Natural killer cell (primary cell): ENCODE measurements at regions of chr10 and their contacts with region 1.

Region 1: GRCh38 chr10:95363303-95363912 is 72.6 kb upstream of the PDLIM1 start:
- DNase-seq: peak in 1 of 2 donors; percentile 80
- ATAC-seq: peak; percentile 65 to 83 (median 75)
- H3K4me3 ChIP-seq: no peak overlapping the region
- H3K4me3 Mint-ChIP-seq: no peak overlapping the region
- H3K27ac ChIP-seq: no peak overlapping the region
- H3K27ac Mint-ChIP-seq: no peak overlapping the region
- H3K4me1 ChIP-seq: no peaks in the 10 kb centered on the region
- H3K4me1 Mint-ChIP-seq: no peaks in the 10 kb centered on the region
- H3K27me3 ChIP-seq: no peaks in the 10 kb centered on the region
- H3K27me3 Mint-ChIP-seq: peaks cover 7 to 13% of the 10 kb centered on the region in 2 donors
- CTCF ChIP-seq: peak; percentile 93

Region 2: GRCh38 chr10:95133016-95133752 is 230.2 kb before region 1 on chr10:
- intact Hi-C with region 1: loop called (anchors 1 kb)
- DNase-seq: peak; percentile 40 to 80
- ATAC-seq: peak in 2 of 3 donors; percentile 63 to 70
- H3K4me3 ChIP-seq: no peak overlapping the region
- H3K4me3 Mint-ChIP-seq: no peak overlapping the region
- H3K27ac ChIP-seq: no peak overlapping the region
- H3K27ac Mint-ChIP-seq: no peak overlapping the region
- H3K4me1 ChIP-seq: no peaks in the 10 kb centered on the region
- H3K4me1 Mint-ChIP-seq: no peaks in the 10 kb centered on the region
- H3K27me3 ChIP-seq: no peaks in the 10 kb centered on the region
- H3K27me3 Mint-ChIP-seq: no peaks in the 10 kb centered on the region
- CTCF ChIP-seq: peak; percentile 54

Region 3: DNA sequence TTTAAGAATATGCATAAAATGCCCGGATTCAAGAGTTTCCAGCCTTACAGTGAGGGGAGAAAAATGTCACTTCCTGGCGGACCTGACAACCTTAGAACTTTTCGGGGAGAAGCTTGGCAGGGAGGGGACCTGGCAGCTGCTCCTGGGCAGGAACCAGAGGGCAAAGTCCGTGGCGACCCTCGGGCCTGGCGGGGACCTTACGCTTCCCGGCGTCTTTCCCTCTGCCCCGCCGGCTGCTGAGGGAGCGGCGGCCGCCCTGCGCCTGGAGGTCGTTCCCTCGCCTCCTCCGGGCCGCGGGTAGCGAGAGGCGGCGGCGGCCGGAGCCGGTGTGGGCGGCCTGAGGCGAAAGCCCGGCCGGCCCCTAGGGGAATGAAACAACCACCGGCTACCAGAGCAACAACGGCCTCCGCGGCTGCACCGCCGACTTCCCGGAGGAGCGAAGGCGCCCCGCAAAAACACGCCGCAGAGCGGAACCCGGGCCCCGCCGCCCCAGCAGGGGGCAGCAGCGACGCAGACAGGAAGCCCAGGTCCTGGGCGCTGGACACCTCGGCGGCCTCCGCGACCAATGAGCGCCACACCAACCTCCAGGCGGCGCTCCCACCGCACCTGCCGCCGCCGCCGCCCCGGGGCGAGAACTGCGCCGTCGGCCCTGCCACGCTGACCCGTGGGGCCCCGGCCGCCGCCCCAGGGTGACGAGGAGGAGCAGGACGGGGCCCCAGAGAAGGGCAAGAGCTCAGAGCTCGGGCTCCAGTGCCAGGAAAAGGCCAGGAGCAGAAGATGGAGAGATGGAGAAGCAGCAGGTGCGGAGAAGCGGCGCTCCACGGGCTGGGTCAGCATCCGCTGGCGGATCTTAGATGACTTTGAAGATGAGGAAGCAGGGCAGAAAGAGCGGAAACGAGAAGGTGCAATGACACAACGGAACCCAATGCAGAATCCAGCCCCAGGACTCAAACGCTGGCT is 179.9 kb before region 1 on chr10:
- intact Hi-C with region 1: loop called (anchors 1 kb)
- DNase-seq: peak; percentile 61 to 77
- ATAC-seq: peak; percentile 97 to 98 (median 97)
- H3K4me3 ChIP-seq: peak overlapping the region; percentile 29
- H3K4me3 Mint-ChIP-seq: peak overlapping the region; percentile 78
- H3K27ac ChIP-seq: peak overlapping the region; percentile 3
- H3K27ac Mint-ChIP-seq: peak overlapping the region in 1 of 2 donors; percentile 48
- H3K4me1 ChIP-seq: peaks cover 4% of the 10 kb centered on the region
- H3K4me1 Mint-ChIP-seq: peaks cover 0 to 8% of the 10 kb centered on the region in 2 donors
- H3K27me3 ChIP-seq: no peaks in the 10 kb centered on the region
- H3K27me3 Mint-ChIP-seq: peaks cover 14 to 16% of the 10 kb centered on the region in 2 donors
- CTCF ChIP-seq: peak; percentile 70

Region 4: GRCh38 chr10:95246579-95247051 is 116.8 kb before region 1 on chr10:
- intact Hi-C with region 1: loop called (anchors 1 kb)
- DNase-seq: peak; percentile 50 to 81
- ATAC-seq: peak; percentile 58 to 86 (median 72)
- H3K4me3 ChIP-seq: no peak overlapping the region
- H3K4me3 Mint-ChIP-seq: no peak overlapping the region
- H3K27ac ChIP-seq: no peak overlapping the region
- H3K27ac Mint-ChIP-seq: no peak overlapping the region
- H3K4me1 ChIP-seq: no peaks in the 10 kb centered on the region
- H3K4me1 Mint-ChIP-seq: no peaks in the 10 kb centered on the region
- H3K27me3 ChIP-seq: no peaks in the 10 kb centered on the region
- H3K27me3 Mint-ChIP-seq: no peaks in the 10 kb centered on the region
- CTCF ChIP-seq: peak; percentile 79

Region 5: GRCh38 chr10:95327367-95327766 is 36.0 kb before region 1 on chr10:
- intact Hi-C with region 1: no loop called
- DNase-seq: no peak
- ATAC-seq: no peak
- H3K4me3 ChIP-seq: no peak overlapping the region
- H3K4me3 Mint-ChIP-seq: no peak overlapping the region
- H3K27ac ChIP-seq: no peak overlapping the region
- H3K27ac Mint-ChIP-seq: no peak overlapping the region
- H3K4me1 ChIP-seq: no peaks in the 10 kb centered on the region
- H3K4me1 Mint-ChIP-seq: no peaks in the 10 kb centered on the region
- H3K27me3 ChIP-seq: no peaks in the 10 kb centered on the region
- H3K27me3 Mint-ChIP-seq: no peaks in the 10 kb centered on the region
- CTCF ChIP-seq: no peak